Naive thymus-derived CD4-positive, alpha-beta T cell (primary cell): ENCODE measurements at regions of chr15 and their contacts with region 1.

Region 1: DNA sequence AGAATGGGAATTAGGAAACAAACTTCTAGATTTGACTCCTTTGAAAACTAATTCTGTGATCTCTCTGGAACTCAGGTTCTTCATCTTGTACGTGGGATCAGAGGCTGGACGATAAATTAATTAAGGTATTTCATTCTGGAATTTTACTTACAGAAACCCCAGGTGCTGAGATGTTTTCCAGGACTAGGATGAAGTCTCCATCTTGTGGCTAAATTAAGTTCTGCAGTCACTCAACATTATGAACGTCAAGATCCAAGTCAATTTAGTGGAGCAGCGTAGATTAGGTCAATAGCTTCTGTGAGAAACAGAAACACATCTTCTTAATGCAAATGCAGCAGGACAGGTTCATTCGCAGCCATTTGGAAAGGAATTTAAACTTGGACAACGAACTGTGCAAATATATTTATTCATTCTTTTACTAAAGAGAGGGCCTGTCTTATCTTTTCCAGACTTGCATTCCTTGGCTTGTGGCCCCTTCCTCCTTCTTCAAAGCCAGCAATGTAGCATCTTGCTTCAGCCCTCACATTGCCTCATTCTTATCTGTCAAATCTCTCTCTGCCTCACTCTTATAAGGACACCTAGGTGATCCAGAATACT is 26.7 kb upstream of the TMC3 start:
- DNase-seq: peak in 6 of 9 donors; percentile 20 to 59 (median 52)
- ATAC-seq: peak; percentile 67
- H3K4me3 ChIP-seq: no peak overlapping the region
- H3K4me3 Mint-ChIP-seq: no peak overlapping the region
- H3K27ac ChIP-seq: no peak overlapping the region
- H3K27ac Mint-ChIP-seq: no peak overlapping the region
- H3K4me1 ChIP-seq: no peaks in the 10 kb centered on the region
- H3K4me1 Mint-ChIP-seq: peaks cover 0 to 5% (median 1%) of the 10 kb centered on the region in 7 donors
- H3K27me3 ChIP-seq: peaks cover 0 to 3% of the 10 kb centered on the region in 2 donors
- H3K27me3 Mint-ChIP-seq: peaks cover 0 to 15% (median 0%) of the 10 kb centered on the region in 5 donors

Region 2: DNA sequence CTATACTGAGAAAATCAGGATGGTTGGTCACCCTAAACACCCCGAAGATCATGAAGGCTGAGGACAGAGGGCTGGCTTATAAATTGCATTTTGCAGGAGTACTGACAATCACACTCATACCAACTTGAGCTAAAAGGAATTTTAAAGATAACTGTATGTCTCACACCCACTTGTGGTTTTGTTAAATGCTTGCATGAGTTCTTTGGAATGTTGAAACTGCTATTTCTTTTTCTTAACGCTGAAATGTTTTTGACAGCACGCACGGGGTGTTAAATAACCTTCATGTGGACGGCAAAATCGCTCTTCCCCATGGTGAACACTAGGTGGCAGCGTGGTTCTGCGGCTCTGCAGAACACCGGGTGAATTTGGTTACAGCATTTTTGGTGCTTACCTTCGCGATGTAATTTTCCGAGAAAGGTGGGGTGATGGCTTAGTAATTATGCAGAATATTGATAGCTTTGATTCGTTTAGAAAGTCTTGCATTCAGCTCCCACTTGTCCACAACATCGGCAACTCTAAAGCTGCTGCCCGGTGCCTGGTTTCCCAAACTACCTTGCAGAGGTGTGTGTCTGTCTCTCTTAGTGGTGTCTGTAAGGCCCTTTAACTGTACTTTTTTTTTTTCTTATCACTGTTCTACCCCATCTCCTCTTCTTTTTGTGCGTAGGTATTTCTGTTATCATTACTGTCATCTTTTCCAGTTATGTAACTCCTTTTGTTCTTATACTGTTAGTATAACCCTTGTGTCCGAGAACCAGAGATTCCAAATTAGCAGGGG is 944.9 kb before region 1 on chr15:
- CTCF ChIA-PET with region 1: no interaction called
- POLR2A ChIA-PET with region 1: no interaction called
- intact Hi-C with region 1: loop called in 1 of 2 experiments (anchors 5 kb)
- DNase-seq: peak; percentile 19 to 62 (median 50)
- ATAC-seq: peak; percentile 78
- H3K4me3 ChIP-seq: no peak overlapping the region
- H3K4me3 Mint-ChIP-seq: no peak overlapping the region
- H3K27ac ChIP-seq: no peak overlapping the region
- H3K27ac Mint-ChIP-seq: no peak overlapping the region
- H3K4me1 ChIP-seq: no peaks in the 10 kb centered on the region
- H3K4me1 Mint-ChIP-seq: no peaks in the 10 kb centered on the region
- H3K27me3 ChIP-seq: no peaks in the 10 kb centered on the region
- H3K27me3 Mint-ChIP-seq: peaks cover 0 to 10% (median 6%) of the 10 kb centered on the region in 5 donors

Region 3: DNA sequence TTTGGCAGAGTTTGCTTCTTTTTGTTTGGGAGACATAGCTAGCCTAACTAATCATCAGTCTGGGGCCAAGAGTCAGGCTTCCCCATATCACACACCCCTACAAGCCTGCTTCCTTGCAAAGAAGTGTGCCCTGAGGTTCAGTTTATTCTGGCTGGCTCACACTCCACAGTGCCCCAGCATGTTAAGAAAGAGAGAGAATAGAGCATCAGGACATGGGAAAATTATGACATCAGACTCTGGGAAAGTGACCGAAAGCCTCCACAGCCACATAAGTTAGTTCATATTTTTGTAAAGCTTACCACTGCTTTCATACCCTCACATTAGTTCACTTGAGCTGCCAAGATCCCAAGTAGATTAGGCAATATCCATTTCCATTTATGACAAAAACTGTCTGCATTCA is 329.6 kb before region 1 on chr15:
- CTCF ChIA-PET with region 1: no interaction called
- POLR2A ChIA-PET with region 1: no interaction called
- intact Hi-C with region 1: no loop called
- DNase-seq: no peak
- ATAC-seq: no peak
- H3K4me3 ChIP-seq: no peak overlapping the region
- H3K4me3 Mint-ChIP-seq: no peak overlapping the region
- H3K27ac ChIP-seq: no peak overlapping the region
- H3K27ac Mint-ChIP-seq: no peak overlapping the region
- H3K4me1 ChIP-seq: no peaks in the 10 kb centered on the region
- H3K4me1 Mint-ChIP-seq: peaks cover 0 to 16% (median 0%) of the 10 kb centered on the region in 7 donors
- H3K27me3 ChIP-seq: no peaks in the 10 kb centered on the region
- H3K27me3 Mint-ChIP-seq: peaks cover 3 to 18% (median 10%) of the 10 kb centered on the region in 5 donors

Region 4: GRCh38 chr15:81106560-81106959 is 294.2 kb before region 1 on chr15:
- CTCF ChIA-PET with region 1: interaction called, 11 read pairs
- POLR2A ChIA-PET with region 1: no interaction called
- intact Hi-C with region 1: loop called (anchors 1 kb)
- DNase-seq: peak in 8 of 9 donors; percentile 2 to 43 (median 31)
- ATAC-seq: peak; percentile 54
- H3K4me3 ChIP-seq: no peak overlapping the region
- H3K4me3 Mint-ChIP-seq: no peak overlapping the region
- H3K27ac ChIP-seq: no peak overlapping the region
- H3K27ac Mint-ChIP-seq: peak overlapping the region in 1 of 9 donors; percentile 73
- H3K4me1 ChIP-seq: no peaks in the 10 kb centered on the region
- H3K4me1 Mint-ChIP-seq: peaks cover 0 to 12% (median 0%) of the 10 kb centered on the region in 7 donors
- H3K27me3 ChIP-seq: no peaks in the 10 kb centered on the region
- H3K27me3 Mint-ChIP-seq: peaks cover 11 to 66% (median 20%) of the 10 kb centered on the region in 5 donors

Region 5: GRCh38 chr15:81155375-81156218 is 245.1 kb before region 1 on chr15:
- CTCF ChIA-PET with region 1: interaction called, 15 read pairs
- POLR2A ChIA-PET with region 1: no interaction called
- intact Hi-C with region 1: loop called (anchors 1 to 5 kb)
- DNase-seq: peak in 6 of 9 donors; percentile 12 to 44 (median 32)
- ATAC-seq: no peak
- H3K4me3 ChIP-seq: no peak overlapping the region
- H3K4me3 Mint-ChIP-seq: no peak overlapping the region
- H3K27ac ChIP-seq: no peak overlapping the region
- H3K27ac Mint-ChIP-seq: peak overlapping the region in 1 of 9 donors; percentile 2
- H3K4me1 ChIP-seq: no peaks in the 10 kb centered on the region
- H3K4me1 Mint-ChIP-seq: peaks cover under 1 to 19% (median 5%) of the 10 kb centered on the region in 7 donors
- H3K27me3 ChIP-seq: no peaks in the 10 kb centered on the region
- H3K27me3 Mint-ChIP-seq: peaks cover 0 to 13% (median under 1%) of the 10 kb centered on the region in 5 donors

Region 6: DNA sequence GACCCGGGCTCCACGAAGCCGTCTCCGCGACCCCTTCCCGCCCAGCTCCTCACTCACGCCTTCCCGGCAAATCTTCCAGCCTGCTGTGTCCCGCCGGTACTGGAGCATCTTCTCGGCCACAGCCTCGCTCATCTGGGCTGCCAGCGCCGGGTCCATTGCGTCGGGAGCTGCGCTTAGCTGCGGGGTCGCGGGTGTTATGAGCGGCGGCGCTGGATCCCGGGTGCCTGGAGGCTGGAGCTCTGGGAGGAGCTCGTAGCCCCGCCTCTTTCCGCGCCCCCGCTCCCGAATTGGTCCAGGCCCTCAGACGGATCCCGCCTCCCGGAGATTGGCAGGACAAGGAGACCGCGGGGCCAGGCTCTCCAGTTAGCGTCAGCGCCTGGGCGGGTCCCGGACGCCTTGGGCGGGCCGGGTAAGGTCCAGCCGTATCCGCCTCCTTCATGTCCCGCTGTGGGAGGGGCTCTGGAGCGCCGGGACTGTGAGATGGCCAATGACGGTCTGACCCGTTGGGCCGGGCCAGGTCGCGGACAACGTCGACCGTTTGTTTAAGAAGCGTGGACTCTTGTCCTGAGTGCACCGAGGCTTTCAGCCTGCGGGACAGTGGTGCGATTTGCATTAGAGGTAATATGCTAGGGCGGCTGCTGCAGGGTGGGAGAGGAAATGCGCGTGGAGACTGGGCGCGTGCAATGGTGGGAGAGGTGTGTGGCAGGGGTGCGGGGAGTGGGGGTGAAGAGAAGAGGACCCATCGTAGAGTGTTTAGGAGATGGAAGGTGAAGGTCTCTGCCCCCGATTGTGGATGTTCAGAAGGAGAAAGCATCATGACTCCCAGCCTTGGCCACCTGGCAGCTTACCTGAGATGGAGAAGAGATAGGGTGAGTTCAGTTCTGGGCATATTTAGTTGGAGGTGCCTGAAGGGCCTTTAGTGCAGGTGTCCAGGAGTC is 76.5 kb before region 1 on chr15 and contains the start of gene STARD5:
- CTCF ChIA-PET with region 1: no interaction called
- POLR2A ChIA-PET with region 1: interaction called, 3 read pairs
- intact Hi-C with region 1: loop called in 1 of 2 experiments (anchors 5 kb)
- DNase-seq: peak; percentile 82 to 97 (median 92)
- ATAC-seq: peak; percentile 99
- H3K4me3 ChIP-seq: peak within 1 kb of the TSS; percentile 86
- H3K4me3 Mint-ChIP-seq: peak within 1 kb of the TSS; percentile 90 to 98 (median 94)
- H3K27ac ChIP-seq: peak within 1 kb of the TSS; percentile 78
- H3K27ac Mint-ChIP-seq: peak within 1 kb of the TSS; percentile 87 to 97 (median 92)
- H3K4me1 ChIP-seq: peaks cover 5 to 20% of the 10 kb centered on the region in 2 donors
- H3K4me1 Mint-ChIP-seq: peaks cover 31 to 65% (median 60%) of the 10 kb centered on the region in 7 donors
- H3K27me3 ChIP-seq: no peaks in the 10 kb centered on the region
- H3K27me3 Mint-ChIP-seq: no peaks in the 10 kb centered on the region
- total RNA-seq, gene STARD5: 5.0 to 11.7 (median 10.1) TPM

Region 7: DNA sequence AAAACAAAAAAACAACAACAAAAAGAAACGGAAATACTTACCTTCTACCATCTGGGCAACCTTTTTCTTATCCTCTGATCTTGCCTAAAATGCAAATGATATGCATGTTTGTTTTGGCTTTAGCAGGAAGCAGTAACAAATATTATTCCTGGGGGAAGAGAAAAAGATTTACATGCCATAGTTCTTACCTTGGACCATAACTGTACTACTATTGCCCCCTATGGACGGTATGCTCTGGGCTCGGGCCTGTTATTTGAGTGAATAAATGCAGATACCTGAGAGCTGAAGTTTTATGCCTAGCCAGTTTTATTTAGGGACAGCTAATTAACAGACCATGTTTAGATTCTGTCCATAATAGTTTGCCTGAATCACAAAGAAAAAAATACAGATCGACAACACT is 64.2 kb before region 1 on chr15:
- CTCF ChIA-PET with region 1: interaction called, 3 read pairs
- POLR2A ChIA-PET with region 1: no interaction called
- intact Hi-C with region 1: loop called in 1 of 2 experiments (anchors 1 kb)
- DNase-seq: peak in 6 of 9 donors; percentile 32 to 49 (median 37)
- ATAC-seq: peak; percentile 70
- H3K4me3 ChIP-seq: no peak overlapping the region
- H3K4me3 Mint-ChIP-seq: no peak overlapping the region
- H3K27ac ChIP-seq: no peak overlapping the region
- H3K27ac Mint-ChIP-seq: peak overlapping the region in 4 of 9 donors; percentile 3 to 68 (median 17)
- H3K4me1 ChIP-seq: peaks cover 0 to 3% of the 10 kb centered on the region in 2 donors
- H3K4me1 Mint-ChIP-seq: peaks cover 4 to 22% (median 12%) of the 10 kb centered on the region in 7 donors
- H3K27me3 ChIP-seq: no peaks in the 10 kb centered on the region
- H3K27me3 Mint-ChIP-seq: peaks cover 0 to 9% (median 0%) of the 10 kb centered on the region in 5 donors